Right ventricle myocardium inferior (tissue), 1 donor: ENCODE measurements at regions of chr6 and their contacts with region 1.

Region 1: GRCh38 chr6:3751730-3752542 is 423 bp upstream of the PXDC1 start:
- DNase-seq: peak; percentile 93
- ATAC-seq: peak; percentile 77

Region 2: DNA sequence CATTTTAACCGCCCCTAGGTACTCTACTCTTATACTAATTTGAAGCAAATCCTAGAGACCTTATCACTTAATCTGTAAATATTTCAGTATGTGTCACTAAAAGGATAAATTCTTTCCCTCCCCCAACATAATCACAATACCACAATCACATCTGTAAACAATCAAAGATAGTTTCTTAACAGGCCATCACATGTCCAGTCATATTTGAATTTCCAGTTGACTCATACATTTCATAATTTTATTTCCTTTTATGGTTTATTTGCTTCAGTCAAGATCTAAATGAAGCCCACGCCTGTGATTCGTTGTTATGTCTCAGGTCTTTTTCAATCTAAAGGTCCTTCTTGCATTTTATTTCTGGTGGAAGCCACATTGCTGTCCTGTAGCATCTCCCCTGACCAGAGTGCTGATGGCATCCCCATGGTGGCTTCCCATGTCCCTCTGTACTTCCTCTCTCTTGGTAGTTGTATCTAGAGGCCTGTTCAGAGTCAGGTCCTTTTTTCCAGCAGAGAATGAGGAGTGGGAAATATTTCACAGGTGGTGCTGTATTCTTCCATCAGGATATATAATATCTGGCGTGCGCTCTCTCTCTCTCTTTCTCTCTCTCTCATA is 166.5 kb before region 1 on chr6:
- intact Hi-C with region 1: no loop called
- DNase-seq: no peak
- ATAC-seq: no peak

Region 3: DNA sequence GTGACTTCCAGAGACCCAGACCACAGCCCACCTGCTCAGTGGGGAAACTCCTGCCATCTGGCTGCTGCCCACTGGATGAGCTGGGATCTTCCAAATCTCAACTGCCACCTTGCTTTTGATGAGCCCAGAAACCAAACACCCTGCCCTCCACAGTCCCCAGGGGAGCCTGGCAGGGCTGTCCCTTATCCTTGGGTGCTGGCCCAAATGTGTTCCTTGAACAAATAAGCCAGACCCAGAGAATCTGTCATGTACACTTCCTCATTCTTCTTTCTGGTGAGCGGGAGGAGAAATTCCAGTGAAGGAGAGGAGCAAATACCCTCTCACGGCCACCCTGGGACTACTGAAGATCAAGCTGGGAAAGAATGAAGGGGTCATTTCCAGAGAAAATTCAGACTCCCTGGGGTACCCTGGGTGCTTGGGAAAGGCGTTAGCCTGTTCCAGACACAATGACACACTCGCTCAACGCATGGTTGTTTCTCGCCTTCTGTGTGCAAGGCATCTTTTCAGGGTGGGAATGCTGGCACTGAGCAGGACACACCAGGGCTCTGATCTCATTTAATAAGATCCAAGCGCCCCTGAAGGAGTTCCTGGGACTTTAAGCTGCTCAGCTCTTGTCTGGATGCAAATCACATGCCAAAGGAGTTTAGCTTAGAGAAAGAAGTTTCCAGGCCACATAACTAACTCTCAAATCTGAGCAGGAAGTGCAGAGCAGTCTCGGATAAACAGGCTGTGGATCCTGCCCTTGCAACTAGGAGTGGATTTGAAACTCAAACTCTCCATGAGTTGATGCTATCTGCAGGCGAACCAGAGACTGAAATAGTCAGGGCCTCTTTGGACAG is 38.9 kb before region 1 on chr6:
- intact Hi-C with region 1: no loop called
- DNase-seq: no peak
- ATAC-seq: no peak

Region 4: GRCh38 chr6:3800850-3801591 is 49.1 kb after region 1 on chr6:
- intact Hi-C with region 1: loop called (anchors 5 kb)
- DNase-seq: no peak
- ATAC-seq: peak; percentile 72

Region 5: GRCh38 chr6:3825851-3826581 is 74.1 kb after region 1 on chr6:
- intact Hi-C with region 1: loop called (anchors 1 kb)
- DNase-seq: peak; percentile 87
- ATAC-seq: peak; percentile 88